Transverse colon (tissue), 4 donors: ENCODE measurements at regions of chr1 and their contacts with region 1.

Region 1: GRCh38 chr1:85576642-85577418 is 3.7 kb upstream of the CCN1 start:
- DNase-seq: peak; percentile 78
- H3K4me3 ChIP-seq: peak overlapping the region; percentile 47 to 63 (median 55)
- H3K27ac ChIP-seq: peak overlapping the region; percentile 91 to 96 (median 92)
- H3K4me1 ChIP-seq: peaks cover 0 to 43% (median 17%) of the 10 kb centered on the region in 4 donors
- H3K27me3 ChIP-seq: peaks cover 39% of the 10 kb centered on the region
- CTCF ChIP-seq: peak; percentile 47 to 84 (median 76)
- EP300 ChIP-seq: no peak
- POLR2A ChIP-seq: peak; percentile 59

Region 2: DNA sequence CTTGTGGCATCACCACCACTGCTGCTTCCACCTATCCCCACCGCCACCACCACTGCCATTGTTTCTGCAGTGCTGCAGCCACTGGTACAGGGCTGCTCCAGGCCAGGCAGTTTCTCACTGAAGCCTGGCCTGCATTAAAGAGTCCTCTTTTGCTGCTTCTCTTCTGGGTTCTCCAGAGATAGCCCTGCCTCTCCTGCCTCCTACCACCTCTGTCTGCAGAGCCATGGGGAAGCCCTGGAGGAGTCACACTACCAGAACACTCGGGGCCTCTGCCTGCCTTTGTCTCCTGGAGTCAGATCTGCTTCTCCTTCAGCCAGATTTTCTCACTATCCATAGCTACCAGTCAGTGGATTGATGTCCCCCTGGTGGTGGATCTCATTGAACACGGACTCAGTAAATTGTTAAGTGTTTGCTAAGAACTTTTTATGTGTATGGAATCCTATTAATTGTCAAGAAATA is 74.2 kb before region 1 on chr1:
- in situ Hi-C with region 1: no loop called
- intact Hi-C with region 1: loop called (anchors 10 kb)
- DNase-seq: peak; percentile 53
- H3K4me3 ChIP-seq: no peak overlapping the region
- H3K27ac ChIP-seq: peak overlapping the region in 1 of 4 donors; percentile 15
- H3K4me1 ChIP-seq: peaks cover 0 to 12% (median 3%) of the 10 kb centered on the region in 4 donors
- H3K27me3 ChIP-seq: no peaks in the 10 kb centered on the region
- CTCF ChIP-seq: peak; percentile 57 to 67 (median 61)
- EP300 ChIP-seq: no peak
- POLR2A ChIP-seq: no peak

Region 3: DNA sequence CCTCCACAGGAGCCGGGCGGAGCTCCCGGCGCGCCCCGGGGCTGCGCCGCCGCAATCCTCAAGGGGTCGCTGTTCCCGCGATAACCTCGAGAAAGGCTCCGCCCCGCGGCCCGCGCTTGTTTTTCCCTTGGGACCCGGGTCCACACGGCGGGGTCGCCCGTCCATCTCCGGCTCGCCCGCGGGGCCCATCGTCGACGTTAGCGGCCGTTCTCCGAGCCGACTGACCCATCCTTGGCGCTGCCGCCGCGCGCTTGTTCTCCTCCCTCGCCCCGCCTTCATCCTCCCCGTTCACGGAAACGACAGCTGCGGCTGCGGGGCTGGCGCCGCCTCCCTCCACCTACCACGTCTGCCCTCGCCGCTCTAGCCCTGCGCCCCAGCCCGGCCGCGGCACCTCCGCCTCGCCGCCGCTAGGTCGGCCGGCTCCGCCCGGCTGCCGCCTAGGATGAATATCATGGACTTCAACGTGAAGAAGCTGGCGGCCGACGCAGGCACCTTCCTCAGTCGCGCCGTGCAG is 1127.7 kb after region 1 on chr1 and contains the start of gene SH3GLB1:
- in situ Hi-C with region 1: no loop called
- intact Hi-C with region 1: loop called (anchors 10 kb)
- DNase-seq: peak; percentile 93
- H3K4me3 ChIP-seq: peak within 1 kb of the TSS; percentile 61 to 87 (median 78)
- H3K27ac ChIP-seq: peak within 1 kb of the TSS; percentile 92 to 100 (median 98)
- H3K4me1 ChIP-seq: peaks cover 7 to 46% (median 22%) of the 10 kb centered on the region in 4 donors
- H3K27me3 ChIP-seq: no peaks in the 10 kb centered on the region
- CTCF ChIP-seq: peak; percentile 92 to 97 (median 94)
- EP300 ChIP-seq: no peak
- POLR2A ChIP-seq: peak; percentile 86
- total RNA-seq, gene SH3GLB1: 52.5 to 75.1 (median 63.4) TPM